ENCODE measurements at regions of chr20 and their contacts with region 1.

Region 1: GRCh38 chr20:32743237-32744112 is at the start of gene COMMD7:
- DNase-seq: peak in 1 of 2 experiments; percentile 49
- H3K4me3 ChIP-seq: peak within 1 kb of the TSS; percentile 97
- H3K27ac ChIP-seq: peak within 1 kb of the TSS; percentile 14; the same call in 1 of the 2 replicates
- H3K4me1 ChIP-seq: peaks cover 39% of the 10 kb centered on the region
- H3K27me3 ChIP-seq: no peaks in the 10 kb centered on the region
- CTCF ChIP-seq: no peak
- total RNA-seq, gene COMMD7: 42.3 and 43.0 TPM in 2 replicates

Region 2: DNA sequence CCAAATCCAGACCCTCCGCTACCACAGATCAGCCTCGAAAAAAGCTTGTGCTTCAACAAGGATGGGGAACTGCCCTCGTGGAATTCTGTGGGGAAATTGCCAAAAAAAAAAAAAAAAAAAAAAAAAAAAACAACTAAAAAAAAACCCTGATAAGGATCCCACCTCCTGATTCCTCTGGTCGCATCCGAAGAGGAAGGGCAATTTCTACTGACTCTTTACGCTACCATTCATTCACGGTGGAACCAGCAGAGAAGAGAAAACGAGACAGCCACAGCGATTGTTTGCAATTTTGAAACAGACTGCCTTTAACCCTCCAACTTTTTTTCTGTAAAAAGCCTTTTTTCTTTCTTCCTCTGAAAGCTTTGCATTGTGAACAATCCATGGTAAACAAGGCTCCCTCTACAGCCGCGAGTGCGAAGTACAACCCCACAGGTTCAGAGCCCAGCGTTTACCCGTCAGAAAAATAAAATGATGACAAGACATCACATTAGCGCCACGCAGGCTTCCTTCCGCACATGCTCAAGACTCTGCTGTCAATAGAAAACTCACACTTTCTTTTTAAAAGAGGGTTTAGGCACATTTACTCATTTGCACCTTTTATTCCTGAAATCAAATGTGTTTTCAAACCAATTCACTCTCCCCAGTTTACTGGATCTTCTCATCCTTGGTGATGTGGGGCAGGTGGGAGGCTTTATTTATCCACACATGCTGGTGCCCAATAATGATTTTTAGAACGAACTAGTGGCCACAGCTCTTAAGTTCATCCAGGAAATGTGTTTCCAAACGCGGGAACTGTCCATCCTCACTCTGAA is 258.3 kb before region 1 on chr20:
- CTCF ChIA-PET with region 1: no interaction called
- POLR2A ChIA-PET with region 1: interaction called, 21 read pairs
- intact Hi-C with region 1: no loop called
- DNase-seq: peak; percentile 59 to 72
- H3K4me3 ChIP-seq: peak overlapping the region; percentile 82
- H3K27ac ChIP-seq: peak overlapping the region; percentile 41; the same call in 1 of the 2 replicates
- H3K4me1 ChIP-seq: peaks cover 13% of the 10 kb centered on the region
- H3K27me3 ChIP-seq: no peaks in the 10 kb centered on the region
- CTCF ChIP-seq: peak; percentile 83

Region 3: DNA sequence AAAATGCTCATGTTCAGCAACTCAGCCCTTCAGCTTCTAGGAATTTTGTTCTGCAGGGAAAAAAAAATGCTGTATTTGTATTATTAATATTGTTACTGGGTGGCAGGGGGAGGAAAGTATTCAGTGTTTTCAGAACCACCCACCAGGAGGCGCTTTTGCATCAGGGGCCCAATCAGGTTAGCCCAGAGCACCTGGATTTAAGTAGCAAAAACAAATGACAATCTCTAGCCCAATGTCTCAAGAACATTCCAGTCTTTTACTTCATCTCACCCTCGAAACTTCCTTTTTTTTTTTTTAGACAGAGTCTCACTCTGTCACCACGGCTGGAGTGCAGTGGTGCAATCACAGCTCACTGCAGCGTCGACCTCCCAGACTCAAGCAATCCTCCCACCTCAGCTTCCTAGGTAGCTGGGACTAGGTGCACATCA is 69.1 kb before region 1 on chr20:
- CTCF ChIA-PET with region 1: interaction called, 6 read pairs
- POLR2A ChIA-PET with region 1: interaction called, 10 read pairs
- intact Hi-C with region 1: no loop called
- DNase-seq: peak; percentile 58 to 73
- H3K4me3 ChIP-seq: no peak overlapping the region
- H3K27ac ChIP-seq: no peak overlapping the region
- H3K4me1 ChIP-seq: peaks cover 10% of the 10 kb centered on the region
- H3K27me3 ChIP-seq: no peaks in the 10 kb centered on the region
- CTCF ChIP-seq: peak; percentile 90

Region 4: DNA sequence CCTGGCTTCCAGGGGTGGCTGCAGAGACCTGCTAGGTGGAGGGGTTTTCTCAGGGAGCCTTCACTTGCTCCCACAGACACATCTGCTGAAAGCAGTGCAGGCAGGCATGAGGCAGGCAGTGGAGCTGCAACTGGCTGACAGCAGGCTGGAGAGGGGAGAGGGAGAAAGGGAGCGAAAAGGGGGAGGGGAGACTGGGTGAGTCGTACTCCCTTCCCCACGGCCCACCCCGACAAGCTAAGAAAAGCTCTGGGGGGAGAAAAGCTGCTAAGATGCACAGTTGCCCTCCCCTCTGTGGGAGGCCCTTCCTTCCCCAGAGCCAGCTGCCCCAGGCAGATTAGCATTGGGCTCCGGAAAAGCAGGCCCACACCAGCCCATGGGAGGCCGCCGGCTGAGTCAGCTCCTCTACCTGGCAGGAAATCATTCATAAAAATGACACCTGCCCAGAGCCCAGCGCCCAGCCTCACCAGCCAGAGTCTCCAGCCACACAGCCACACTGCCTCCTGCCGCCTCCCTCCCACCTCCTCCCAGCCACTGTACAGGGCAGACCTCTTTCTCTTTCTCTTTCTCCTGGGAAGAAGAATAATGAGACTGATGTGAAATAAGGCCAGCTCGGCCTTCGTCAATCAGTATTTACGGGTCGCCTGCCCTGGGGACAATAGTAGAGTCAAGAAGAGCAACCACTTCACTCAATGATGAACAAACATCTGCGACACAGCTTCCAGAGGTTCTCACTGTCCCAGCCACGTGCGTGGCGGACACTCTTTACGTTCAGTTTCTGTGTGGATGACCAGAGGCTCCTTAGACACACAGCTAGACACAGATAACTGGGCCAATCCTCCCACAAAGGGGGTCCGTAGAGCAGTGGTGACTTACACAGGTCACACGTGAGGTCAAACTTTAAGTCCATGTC is 62.0 kb before region 1 on chr20:
- CTCF ChIA-PET with region 1: interaction called, 3 read pairs
- POLR2A ChIA-PET with region 1: no interaction called
- intact Hi-C with region 1: loop called (anchors 5 kb)
- DNase-seq: peak; percentile 56 to 76
- H3K4me3 ChIP-seq: no peak overlapping the region
- H3K27ac ChIP-seq: no peak overlapping the region
- H3K4me1 ChIP-seq: peaks cover 22% of the 10 kb centered on the region
- H3K27me3 ChIP-seq: no peaks in the 10 kb centered on the region
- CTCF ChIP-seq: no peak

Region 5: GRCh38 chr20:32762149-32762753 is 18.8 kb after region 1 on chr20 and contains the start of gene DNMT3B:
- CTCF ChIA-PET with region 1: interaction called, 24 read pairs
- POLR2A ChIA-PET with region 1: interaction called, 9 read pairs
- intact Hi-C with region 1: loop called (anchors 2 kb)
- DNase-seq: peak; percentile 51 to 90
- H3K4me3 ChIP-seq: peak within 1 kb of the TSS; percentile 93
- H3K27ac ChIP-seq: no peak within 1 kb of the TSS
- H3K4me1 ChIP-seq: peaks cover 7% of the 10 kb centered on the region; the same call in 1 of the 2 replicates
- H3K27me3 ChIP-seq: no peaks in the 10 kb centered on the region
- CTCF ChIP-seq: no peak
- total RNA-seq, gene DNMT3B: 5.7 and 8.0 TPM in 2 replicates

Region 6: DNA sequence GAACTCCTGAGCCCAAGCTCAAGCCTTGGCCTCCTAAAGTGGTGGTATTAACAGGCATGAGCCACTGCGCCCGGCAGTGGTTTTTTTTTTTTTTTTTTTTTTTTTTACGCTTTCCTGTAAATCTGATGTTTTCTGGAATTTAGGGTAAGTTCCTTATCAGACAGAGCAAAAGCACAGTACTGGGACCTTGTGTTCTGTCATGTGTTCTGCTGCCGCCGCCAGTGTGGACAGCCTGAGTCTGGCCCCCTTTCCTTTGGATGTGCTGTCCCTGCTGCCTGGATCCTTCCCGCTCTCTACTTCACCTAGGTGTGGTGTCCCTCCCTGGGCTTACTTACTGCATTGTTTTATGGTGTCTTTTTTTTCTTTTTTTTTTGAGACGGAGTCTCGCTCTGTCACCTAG is 30.4 kb after region 1 on chr20:
- CTCF ChIA-PET with region 1: interaction called, 16 read pairs
- POLR2A ChIA-PET with region 1: no interaction called
- intact Hi-C with region 1: no loop called
- DNase-seq: no peak
- H3K4me3 ChIP-seq: no peak overlapping the region
- H3K27ac ChIP-seq: no peak overlapping the region
- H3K4me1 ChIP-seq: no peaks in the 10 kb centered on the region
- H3K27me3 ChIP-seq: no peaks in the 10 kb centered on the region
- CTCF ChIP-seq: no peak

Region 7: GRCh38 chr20:33249456-33249855 is 506.0 kb after region 1 on chr20:
- CTCF ChIA-PET with region 1: no interaction called
- POLR2A ChIA-PET with region 1: no interaction called
- intact Hi-C with region 1: no loop called
- DNase-seq: no peak
- H3K4me3 ChIP-seq: no peak overlapping the region
- H3K27ac ChIP-seq: no peak overlapping the region
- H3K4me1 ChIP-seq: no peaks in the 10 kb centered on the region
- H3K27me3 ChIP-seq: no peaks in the 10 kb centered on the region
- CTCF ChIP-seq: no peak

Region 8: DNA sequence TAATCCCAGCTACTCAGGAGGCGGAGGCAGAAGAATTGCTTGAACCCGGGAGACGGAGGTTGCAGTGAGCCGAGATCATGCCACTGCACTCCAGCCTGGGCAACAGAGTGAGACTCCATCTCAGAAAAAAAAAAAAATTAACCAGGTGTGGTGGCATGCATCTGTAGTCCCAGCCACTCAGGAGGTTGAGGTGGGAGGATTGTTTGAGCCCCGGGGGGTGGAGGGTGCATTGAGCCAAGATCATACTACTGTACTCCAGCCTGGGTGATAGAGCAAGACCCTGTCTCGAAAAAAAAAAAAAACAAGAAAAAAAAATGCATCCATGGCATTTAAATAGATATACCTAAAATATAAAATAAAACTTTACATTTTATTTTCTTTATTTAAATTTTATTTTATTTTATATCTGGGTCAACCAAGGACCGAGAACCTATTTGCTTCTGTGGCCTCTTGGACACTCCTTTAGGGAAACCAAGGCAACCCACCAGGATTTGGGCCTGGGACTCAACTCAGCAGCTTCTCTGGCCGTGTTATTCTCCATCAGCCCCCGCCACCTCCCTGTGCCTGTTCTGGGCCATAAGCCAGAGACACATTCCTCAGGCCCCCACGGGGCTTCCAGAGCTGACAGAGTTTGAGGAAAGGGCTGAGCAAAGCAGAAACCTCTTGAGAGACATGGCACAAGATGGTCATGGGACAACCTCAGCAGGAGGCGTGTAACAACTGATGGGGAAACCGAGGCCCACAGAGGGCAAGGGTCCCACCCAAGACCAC is 693.9 kb after region 1 on chr20:
- CTCF ChIA-PET with region 1: no interaction called
- POLR2A ChIA-PET with region 1: no interaction called
- intact Hi-C with region 1: no loop called
- DNase-seq: no peak
- H3K4me3 ChIP-seq: no peak overlapping the region
- H3K27ac ChIP-seq: no peak overlapping the region
- H3K4me1 ChIP-seq: no peaks in the 10 kb centered on the region
- H3K27me3 ChIP-seq: no peaks in the 10 kb centered on the region
- CTCF ChIP-seq: no peak